HepG2 (cell line): ENCODE measurements at regions of chr11 and their contacts with region 1.

Region 1: GRCh38 chr11:64935359-64936081 is at the start of gene GPHA2:
- DNase-seq: peak; percentile 68
- ATAC-seq: peak; percentile 77
- H3K4me3 ChIP-seq: peak within 1 kb of the TSS; percentile 52 to 71 (median 52); a peak in 5 of 6 replicates
- H3K27ac ChIP-seq: peak within 1 kb of the TSS; percentile 12
- H3K4me1 ChIP-seq: peaks cover 39% of the 10 kb centered on the region
- H3K27me3 ChIP-seq: peaks cover 0 to 7% of the 10 kb centered on the region in 2 experiments; a peak in 3 of 5 replicates
- CTCF ChIP-seq: peak; percentile 60
- EP300 ChIP-seq: no peak
- POLR2A ChIP-seq: peak; percentile 66 to 91
- RAD21 ChIP-seq: no peak
- total RNA-seq, gene GPHA2: 11.6 and 19.1 TPM in 2 replicates

Region 2: GRCh38 chr11:64048042-64048854 is 887.3 kb before region 1 on chr11:
- CTCF ChIA-PET with region 1: no interaction called
- POLR2A ChIA-PET with region 1: no interaction called
- in situ Hi-C with region 1: no loop called
- intact Hi-C with region 1: no loop called
- DNase-seq: peak; percentile 66
- ATAC-seq: peak; percentile 72
- H3K4me3 ChIP-seq: peak overlapping the region in 1 of 3 experiments; percentile 35; a peak in 1 of 6 replicates
- H3K27ac ChIP-seq: no peak overlapping the region
- H3K4me1 ChIP-seq: peaks cover 29% of the 10 kb centered on the region
- H3K27me3 ChIP-seq: no peaks in the 10 kb centered on the region
- CTCF ChIP-seq: peak; percentile 13; the same call in 1 of the 2 replicates
- EP300 ChIP-seq: peak in 1 of 2 experiments; percentile 43; a peak in 1 of 4 replicates
- POLR2A ChIP-seq: no peak
- RAD21 ChIP-seq: no peak

Region 3: GRCh38 chr11:64916775-64917662 is 18.5 kb before region 1 on chr11 and contains the start of gene ATG2A:
- CTCF ChIA-PET with region 1: no interaction called
- POLR2A ChIA-PET with region 1: interaction called, 15 read pairs
- in situ Hi-C with region 1: no loop called
- intact Hi-C with region 1: no loop called
- DNase-seq: peak; percentile 99
- ATAC-seq: peak; percentile 95
- H3K4me3 ChIP-seq: peak within 1 kb of the TSS; percentile 78 to 100 (median 93)
- H3K27ac ChIP-seq: peak within 1 kb of the TSS; percentile 63
- H3K4me1 ChIP-seq: peaks cover 36% of the 10 kb centered on the region
- H3K27me3 ChIP-seq: no peaks in the 10 kb centered on the region; a peak in 1 of 5 replicates
- CTCF ChIP-seq: no peak
- EP300 ChIP-seq: 0 out of 4 replicates have a peak, but pooled peaks of 1 of the 2 experiments have one; percentile 7
- POLR2A ChIP-seq: peak; percentile 73 to 93
- RAD21 ChIP-seq: peak; percentile 36; the same call in 1 of the 2 replicates
- total RNA-seq, gene ATG2A: 6.5 and 6.7 TPM in 2 replicates

Region 4: DNA sequence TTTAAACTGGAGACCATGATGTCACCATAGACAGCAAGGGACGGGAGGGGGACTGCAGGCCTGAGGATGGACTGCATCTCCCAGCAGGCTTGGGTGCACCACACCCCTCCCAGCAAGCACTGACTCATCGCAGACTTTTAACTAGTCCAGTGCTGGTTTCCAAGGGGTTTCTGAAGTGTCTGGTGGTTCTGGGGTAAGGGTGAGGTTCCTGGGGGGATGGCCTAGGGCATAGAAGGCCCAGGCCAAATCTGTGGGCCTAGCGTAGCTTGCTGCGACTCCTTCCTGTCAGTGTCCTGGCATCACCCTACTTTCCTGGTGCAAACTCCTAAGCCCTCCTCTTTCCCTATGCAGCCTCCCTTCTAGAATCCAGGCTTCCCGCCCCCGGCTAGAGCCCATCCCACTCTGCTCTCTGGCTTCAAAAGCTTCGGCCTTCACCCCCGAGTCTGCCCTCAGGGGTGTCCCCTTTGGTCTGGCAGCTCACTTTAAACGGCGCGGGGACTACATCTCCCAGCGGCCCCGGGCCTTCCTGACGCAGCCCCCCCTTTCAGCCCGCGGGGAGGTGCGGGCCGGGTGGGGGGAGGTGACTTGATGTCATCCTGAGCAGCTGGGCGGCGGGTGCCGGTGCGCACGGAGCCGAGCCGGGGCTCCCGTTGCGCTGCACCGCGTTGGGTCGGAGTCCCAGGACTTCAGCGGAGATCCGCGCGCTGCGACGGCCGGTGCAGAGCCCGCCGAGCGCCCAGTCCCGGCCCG is 11.2 kb before region 1 on chr11 and contains the start of gene PPP2R5B:
- CTCF ChIA-PET with region 1: no interaction called
- POLR2A ChIA-PET with region 1: interaction called, 22 read pairs
- in situ Hi-C with region 1: no loop called
- intact Hi-C with region 1: no loop called
- DNase-seq: peak; percentile 85
- ATAC-seq: peak; percentile 94
- H3K4me3 ChIP-seq: peak within 1 kb of the TSS; percentile 58 to 80 (median 72)
- H3K27ac ChIP-seq: peak within 1 kb of the TSS; percentile 64
- H3K4me1 ChIP-seq: peaks cover 43% of the 10 kb centered on the region
- H3K27me3 ChIP-seq: no peaks in the 10 kb centered on the region; a peak in 1 of 5 replicates
- CTCF ChIP-seq: peak; percentile 4; the same call in 1 of the 2 replicates
- EP300 ChIP-seq: no peak; a peak in 1 of 4 replicates
- POLR2A ChIP-seq: 0 out of 4 replicates have a peak, but pooled peaks of 1 of the 2 experiments have one; percentile 28
- RAD21 ChIP-seq: no peak
- total RNA-seq, gene PPP2R5B: 1.6 and 2.3 TPM in 2 replicates

Region 5: GRCh38 chr11:64976651-64977050 is 41.1 kb after region 1 on chr11:
- CTCF ChIA-PET with region 1: no interaction called
- POLR2A ChIA-PET with region 1: no interaction called
- in situ Hi-C with region 1: no loop called
- intact Hi-C with region 1: no loop called
- DNase-seq: no peak
- ATAC-seq: no peak
- H3K4me3 ChIP-seq: no peak overlapping the region
- H3K27ac ChIP-seq: no peak overlapping the region
- H3K4me1 ChIP-seq: no peaks in the 10 kb centered on the region
- H3K27me3 ChIP-seq: peaks cover 0 to 14% of the 10 kb centered on the region in 2 experiments; a peak in 3 of 5 replicates
- CTCF ChIP-seq: no peak
- EP300 ChIP-seq: no peak
- POLR2A ChIP-seq: no peak
- RAD21 ChIP-seq: no peak